Psoas muscle (tissue), 8 donors: ENCODE measurements at regions of chr17 and their contacts with region 1.

Region 1: DNA sequence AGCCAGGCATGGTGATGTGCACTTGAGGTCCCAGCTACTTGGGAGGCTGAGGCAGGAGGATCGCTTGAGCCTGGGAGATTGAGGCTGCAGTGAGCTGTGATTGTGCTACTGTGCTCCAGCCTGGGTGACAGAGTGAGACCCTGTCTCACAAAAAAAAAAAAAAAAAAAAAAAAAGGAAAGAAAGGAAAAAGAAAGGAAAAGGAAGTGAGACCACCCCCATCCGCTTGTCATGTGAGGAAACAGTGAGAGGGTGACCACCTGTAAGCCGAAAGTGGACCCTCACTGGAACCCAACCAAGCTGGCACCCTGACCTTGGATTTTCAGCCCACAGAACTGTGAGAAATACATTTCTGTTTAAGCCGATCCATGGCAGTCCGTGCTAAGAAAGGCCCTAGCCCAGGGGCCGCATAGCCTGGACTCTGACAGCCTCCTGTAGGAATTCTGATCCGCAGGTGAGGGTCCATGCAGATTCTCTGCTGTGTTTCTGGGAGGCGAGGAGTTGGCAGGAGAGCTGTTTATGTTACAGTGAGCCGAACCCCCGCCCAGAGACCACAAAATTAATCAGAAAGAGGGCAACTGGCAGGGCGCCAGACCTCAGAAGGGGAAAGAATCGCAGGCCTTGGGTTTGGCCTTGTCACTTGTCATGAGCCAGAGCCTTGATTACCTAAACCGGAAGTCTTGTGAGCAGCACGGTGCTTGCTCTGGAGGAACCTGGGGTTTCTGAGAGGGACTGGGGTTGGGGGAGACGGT is 945 bp downstream of the SGSH start:
- DNase-seq: peak; percentile 78 to 80
- ATAC-seq: peak; percentile 21 to 51 (median 42)
- H3K4me3 ChIP-seq: peak overlapping the region; percentile 96
- H3K27ac ChIP-seq: peak overlapping the region; percentile 89
- H3K4me1 ChIP-seq: peaks cover 6% of the 10 kb centered on the region
- H3K27me3 ChIP-seq: no peaks in the 10 kb centered on the region
- CTCF ChIP-seq: no peak

Region 2: GRCh38 chr17:80147035-80147836 is 72.0 kb before region 1 on chr17 and contains the start of gene EIF4A3:
- intact Hi-C with region 1: loop called in 1 of 2 experiments (anchors 5 kb)
- DNase-seq: peak; percentile 98 to 99
- ATAC-seq: peak; percentile 97 to 98 (median 98)
- H3K4me3 ChIP-seq: peak within 1 kb of the TSS; percentile 99
- H3K27ac ChIP-seq: peak within 1 kb of the TSS; percentile 93
- H3K4me1 ChIP-seq: peaks cover 17% of the 10 kb centered on the region
- H3K27me3 ChIP-seq: no peaks in the 10 kb centered on the region
- CTCF ChIP-seq: no peak
- total RNA-seq, gene EIF4A3: 30.1 to 51.2 (median 37.7) TPM

Region 3: GRCh38 chr17:80237351-80237750 is 18.2 kb after region 1 on chr17:
- intact Hi-C with region 1: no loop called
- DNase-seq: peak in 1 of 2 donors; percentile 39
- ATAC-seq: no peak
- H3K4me3 ChIP-seq: no peak overlapping the region
- H3K27ac ChIP-seq: no peak overlapping the region
- H3K4me1 ChIP-seq: no peaks in the 10 kb centered on the region
- H3K27me3 ChIP-seq: no peaks in the 10 kb centered on the region
- CTCF ChIP-seq: no peak